MCF 10A (cell line): ENCODE measurements at regions of chr3 and their contacts with region 1.

Region 1: GRCh38 chr3:14144423-14145075 is 19.7 kb downstream of the TMEM43 start:
- DNase-seq: peak; percentile 97
- H3K4me3 Mint-ChIP-seq: peak overlapping the region; percentile 65
- H3K27ac Mint-ChIP-seq: peak overlapping the region; percentile 99
- H3K4me1 Mint-ChIP-seq: peaks cover 46% of the 10 kb centered on the region
- H3K27me3 Mint-ChIP-seq: no peaks in the 10 kb centered on the region
- CTCF ChIP-seq: no peak

Region 2: DNA sequence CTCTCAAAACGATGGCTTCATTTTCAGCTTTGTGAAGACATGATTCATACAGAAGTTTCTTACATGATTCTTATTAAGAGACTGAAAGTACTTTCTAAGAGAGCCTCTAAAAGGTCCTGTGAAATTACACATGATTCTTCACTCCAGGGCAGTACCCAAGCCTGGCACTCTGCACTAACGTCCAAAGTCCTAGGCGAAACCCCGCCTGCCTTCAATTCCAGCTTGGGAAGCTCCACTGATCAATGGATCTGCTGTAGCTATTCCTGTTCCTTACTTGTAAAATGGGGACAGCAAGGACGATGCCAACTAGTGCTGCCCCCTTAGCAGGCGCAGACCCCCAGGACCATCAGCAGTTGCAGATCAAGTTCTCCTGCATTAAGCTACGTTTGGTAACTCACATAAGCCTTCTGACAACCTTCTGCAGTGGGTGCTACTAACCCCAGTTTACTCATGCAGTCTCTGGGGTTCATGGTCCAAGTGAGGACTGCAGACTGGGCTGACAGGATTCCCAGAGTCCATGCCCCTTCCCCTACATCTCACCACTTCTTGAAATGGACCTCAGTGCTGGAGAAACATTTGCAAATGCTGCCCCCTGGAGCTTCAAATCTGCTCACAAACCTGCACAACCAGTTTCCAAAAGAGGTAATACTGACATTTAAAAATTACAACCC is 30.4 kb before region 1 on chr3:
- CTCF ChIA-PET with region 1: no interaction called
- POLR2A ChIA-PET with region 1: interaction called, 13 read pairs
- intact Hi-C with region 1: no loop called
- DNase-seq: no peak
- H3K4me3 Mint-ChIP-seq: no peak overlapping the region
- H3K27ac Mint-ChIP-seq: no peak overlapping the region
- H3K4me1 Mint-ChIP-seq: no peaks in the 10 kb centered on the region
- H3K27me3 Mint-ChIP-seq: no peaks in the 10 kb centered on the region
- CTCF ChIP-seq: peak; percentile 13

Region 3: GRCh38 chr3:14124615-14125190 is 19.8 kb before region 1 on chr3 and contains the starts of genes CHCHD4 and TMEM43:
- CTCF ChIA-PET with region 1: interaction called, 8 read pairs
- POLR2A ChIA-PET with region 1: interaction called, 294 read pairs
- intact Hi-C with region 1: loop called (anchors 1 kb)
- DNase-seq: peak; percentile 99
- H3K4me3 Mint-ChIP-seq: peak within 1 kb of the TSS; percentile 99
- H3K27ac Mint-ChIP-seq: peak within 1 kb of the TSS; percentile 96
- H3K4me1 Mint-ChIP-seq: peaks cover 30% of the 10 kb centered on the region
- H3K27me3 Mint-ChIP-seq: no peaks in the 10 kb centered on the region
- CTCF ChIP-seq: no peak
- total RNA-seq, gene CHCHD4: 31.6 and 35.0 TPM in 2 replicates
- total RNA-seq, gene TMEM43: 120 and 124 TPM in 2 replicates

Region 4: DNA sequence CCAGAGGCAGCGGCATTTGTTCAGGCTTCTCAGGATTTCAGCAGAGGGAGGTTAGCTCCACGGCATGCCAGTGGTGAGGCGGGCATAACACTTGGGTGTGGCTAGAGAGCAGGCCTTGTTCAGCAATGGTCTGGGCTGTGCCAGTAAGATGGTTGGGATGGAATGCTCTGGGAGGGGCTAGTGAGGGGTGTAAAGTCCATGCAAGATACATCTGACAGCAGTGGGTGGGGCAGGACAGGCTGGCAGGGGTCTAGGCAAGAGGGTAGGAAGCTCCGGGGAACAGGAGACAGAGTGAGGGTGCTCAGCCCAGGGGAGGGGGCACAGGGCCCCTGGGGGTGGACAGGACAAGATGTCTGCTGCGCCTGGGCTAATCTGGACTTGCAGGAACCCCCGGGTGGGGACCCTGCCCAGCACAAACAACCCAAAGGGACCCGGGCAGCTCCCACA is 11.3 kb before region 1 on chr3:
- CTCF ChIA-PET with region 1: interaction called, 3 read pairs
- POLR2A ChIA-PET with region 1: interaction called, 294 read pairs
- intact Hi-C with region 1: no loop called
- DNase-seq: no peak
- H3K4me3 Mint-ChIP-seq: no peak overlapping the region
- H3K27ac Mint-ChIP-seq: peak overlapping the region; percentile 73
- H3K4me1 Mint-ChIP-seq: peaks cover 31% of the 10 kb centered on the region
- H3K27me3 Mint-ChIP-seq: no peaks in the 10 kb centered on the region
- CTCF ChIP-seq: no peak

Region 5: DNA sequence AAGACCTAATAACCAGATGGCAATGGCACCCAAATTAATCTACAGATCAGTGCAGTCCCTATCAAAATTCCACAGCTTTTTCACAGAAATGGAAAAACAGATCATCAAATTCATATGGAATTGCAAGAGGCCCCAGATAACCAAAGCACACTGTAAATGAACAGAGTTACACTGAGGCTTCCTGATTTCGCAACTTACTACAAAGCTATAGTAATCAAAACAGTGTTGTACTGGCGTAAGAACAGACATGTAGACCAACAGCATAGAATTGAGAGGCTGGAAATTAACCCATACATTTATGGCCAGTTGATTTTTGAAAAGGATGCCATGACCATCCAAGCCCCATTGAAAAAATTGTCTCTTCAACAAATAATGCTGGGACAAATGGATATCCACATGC is 17.6 kb after region 1 on chr3:
- CTCF ChIA-PET with region 1: interaction called, 6 read pairs
- POLR2A ChIA-PET with region 1: interaction called, 36 read pairs
- intact Hi-C with region 1: no loop called
- DNase-seq: no peak
- H3K4me3 Mint-ChIP-seq: no peak overlapping the region
- H3K27ac Mint-ChIP-seq: peak overlapping the region; percentile 59
- H3K4me1 Mint-ChIP-seq: peaks cover 20% of the 10 kb centered on the region
- H3K27me3 Mint-ChIP-seq: no peaks in the 10 kb centered on the region
- CTCF ChIP-seq: no peak

Region 6: GRCh38 chr3:14170531-14171173 is 26.1 kb after region 1 on chr3:
- CTCF ChIA-PET with region 1: interaction called, 6 read pairs
- POLR2A ChIA-PET with region 1: interaction called, 97 read pairs
- intact Hi-C with region 1: loop called (anchors 5 kb)
- DNase-seq: no peak
- H3K4me3 Mint-ChIP-seq: peak overlapping the region; percentile 39
- H3K27ac Mint-ChIP-seq: peak overlapping the region; percentile 96
- H3K4me1 Mint-ChIP-seq: peaks cover 74% of the 10 kb centered on the region
- H3K27me3 Mint-ChIP-seq: no peaks in the 10 kb centered on the region
- CTCF ChIP-seq: no peak

Region 7: DNA sequence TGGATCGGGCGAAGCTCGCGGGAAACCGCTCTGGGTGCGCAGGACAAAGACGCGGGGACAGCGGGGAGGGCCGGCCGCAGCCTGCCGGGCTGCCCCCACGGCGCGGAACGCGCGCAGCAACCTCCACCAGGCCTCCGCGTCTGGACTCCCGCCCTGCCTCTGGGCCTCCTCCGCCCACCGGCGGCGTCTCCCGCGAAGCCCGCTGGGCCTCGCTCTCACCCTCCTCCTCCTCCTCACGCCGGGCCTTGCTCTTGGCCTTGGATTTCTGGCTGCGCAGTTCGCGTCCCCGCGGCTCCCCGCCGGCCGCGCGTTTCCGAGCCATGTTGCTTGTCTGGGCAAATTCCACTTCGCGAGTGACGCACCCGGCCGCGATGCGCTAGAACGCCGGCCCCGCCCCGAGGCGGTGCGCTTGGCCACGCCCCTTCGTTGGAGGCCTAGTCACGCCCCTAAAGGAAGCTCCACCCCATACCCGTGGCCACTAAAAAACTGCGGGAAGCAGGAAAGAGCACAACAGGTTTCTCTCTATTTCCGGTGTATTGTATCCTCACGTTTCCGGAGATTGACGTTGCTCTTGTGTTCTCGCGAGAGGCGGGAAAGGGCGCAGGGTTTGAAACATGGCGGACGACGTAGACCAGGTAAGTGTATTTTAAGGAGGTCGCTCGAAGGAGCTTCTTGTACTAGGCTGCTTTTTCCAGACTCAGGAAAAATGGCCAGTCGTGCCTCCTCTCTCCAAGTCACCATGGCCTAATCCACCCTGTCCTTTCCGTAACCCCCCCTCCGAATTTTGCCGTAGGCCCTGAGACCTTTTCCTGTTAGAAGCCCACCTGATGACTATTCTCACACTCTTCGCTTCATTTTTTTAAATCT is 33.9 kb after region 1 on chr3 and contains the starts of genes LSM3 and XPC:
- CTCF ChIA-PET with region 1: interaction called, 5 read pairs
- POLR2A ChIA-PET with region 1: interaction called, 97 read pairs
- intact Hi-C with region 1: loop called (anchors 5 kb)
- DNase-seq: peak; percentile 99
- H3K4me3 Mint-ChIP-seq: peak within 1 kb of the TSS; percentile 85
- H3K27ac Mint-ChIP-seq: peak within 1 kb of the TSS; percentile 100
- H3K4me1 Mint-ChIP-seq: peaks cover 41% of the 10 kb centered on the region
- H3K27me3 Mint-ChIP-seq: no peaks in the 10 kb centered on the region
- CTCF ChIP-seq: no peak
- total RNA-seq, gene LSM3: 10.2 and 12.9 TPM in 2 replicates
- total RNA-seq, gene XPC: 73.3 and 83.6 TPM in 2 replicates

Region 8: GRCh38 chr3:14577897-14578296 is 433.3 kb after region 1 on chr3:
- CTCF ChIA-PET with region 1: no interaction called
- POLR2A ChIA-PET with region 1: no interaction called
- intact Hi-C with region 1: no loop called
- DNase-seq: no peak
- H3K4me3 Mint-ChIP-seq: no peak overlapping the region
- H3K27ac Mint-ChIP-seq: no peak overlapping the region
- H3K4me1 Mint-ChIP-seq: no peaks in the 10 kb centered on the region
- H3K27me3 Mint-ChIP-seq: peaks cover 77% of the 10 kb centered on the region
- CTCF ChIP-seq: no peak